ENCODE measurements at regions of chr1 and their contacts with region 1.

Region 1: GRCh38 chr1:205284343-205285144 is 37.0 kb downstream of the NUAK2 start:
- DNase-seq: peak; percentile 93
- H3K4me3 Mint-ChIP-seq: peak overlapping the region; percentile 77
- H3K27ac Mint-ChIP-seq: peak overlapping the region; percentile 91
- H3K4me1 Mint-ChIP-seq: peaks cover 83% of the 10 kb centered on the region
- H3K27me3 Mint-ChIP-seq: peaks cover 17% of the 10 kb centered on the region

Region 2: GRCh38 chr1:205150651-205151428 is 133.7 kb before region 1 on chr1:
- CTCF ChIA-PET with region 1: no interaction called
- POLR2A ChIA-PET with region 1: no interaction called
- DNase-seq: no peak
- H3K4me3 Mint-ChIP-seq: no peak overlapping the region
- H3K27ac Mint-ChIP-seq: no peak overlapping the region
- H3K4me1 Mint-ChIP-seq: no peaks in the 10 kb centered on the region
- H3K27me3 Mint-ChIP-seq: no peaks in the 10 kb centered on the region

Region 3: GRCh38 chr1:205313563-205314308 is 29.2 kb after region 1 on chr1:
- CTCF ChIA-PET with region 1: interaction called, 724 read pairs
- POLR2A ChIA-PET with region 1: interaction called, 234 read pairs
- DNase-seq: peak; percentile 24
- H3K4me3 Mint-ChIP-seq: peak overlapping the region; percentile 56
- H3K27ac Mint-ChIP-seq: peak overlapping the region; percentile 68
- H3K4me1 Mint-ChIP-seq: peaks cover 55% of the 10 kb centered on the region
- H3K27me3 Mint-ChIP-seq: no peaks in the 10 kb centered on the region

Region 4: DNA sequence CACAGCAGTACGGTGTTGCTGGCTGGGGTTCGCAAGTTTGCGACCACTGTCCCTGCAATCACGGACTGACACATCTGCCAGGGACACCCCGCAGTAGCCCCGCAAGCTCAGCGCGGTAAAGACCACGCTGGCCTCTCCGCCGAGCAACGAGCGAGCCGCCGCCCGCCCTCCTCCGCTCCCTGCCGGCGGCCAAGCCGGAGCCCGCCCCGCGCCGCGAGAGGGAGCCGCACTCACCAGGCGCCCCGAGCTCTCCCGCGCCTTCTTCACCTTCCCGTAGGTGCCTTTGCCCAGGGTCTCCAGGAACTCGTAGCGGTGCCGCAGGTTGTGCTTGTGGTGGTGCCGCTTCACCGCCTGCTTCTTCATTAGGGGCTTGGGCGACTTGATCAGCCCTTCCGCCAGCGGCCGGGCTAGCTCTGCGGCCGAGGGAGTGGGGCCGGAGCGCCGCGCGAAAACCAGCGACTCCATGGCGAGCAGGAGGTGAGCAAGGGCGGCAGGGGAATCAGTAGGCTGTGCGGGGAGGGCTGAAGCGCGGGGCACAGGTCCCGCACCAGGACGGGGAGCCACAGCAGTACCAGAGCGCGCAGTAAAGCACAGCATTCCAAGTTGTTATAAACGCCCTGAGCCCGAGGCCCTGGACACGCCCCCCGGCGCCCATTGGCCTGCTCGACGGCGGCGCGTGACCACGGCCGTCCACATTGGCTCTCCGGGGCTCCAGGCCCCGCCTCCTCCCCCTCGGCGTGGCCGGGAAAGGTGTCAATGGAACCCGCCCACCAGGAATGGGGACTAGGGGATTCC is 36.8 kb after region 1 on chr1 and contains the start of gene NUAK2:
- CTCF ChIA-PET with region 1: interaction called, 724 read pairs
- POLR2A ChIA-PET with region 1: interaction called, 234 read pairs
- DNase-seq: peak; percentile 80
- H3K4me3 Mint-ChIP-seq: peak within 1 kb of the TSS; percentile 86
- H3K27ac Mint-ChIP-seq: peak within 1 kb of the TSS; percentile 71
- H3K4me1 Mint-ChIP-seq: peaks cover 54% of the 10 kb centered on the region
- H3K27me3 Mint-ChIP-seq: peaks cover 22% of the 10 kb centered on the region
- total RNA-seq, gene NUAK2: 12.4 to 13.0 TPM

Region 5: GRCh38 chr1:205375835-205376545 is 91.4 kb after region 1 on chr1:
- CTCF ChIA-PET with region 1: no interaction called
- POLR2A ChIA-PET with region 1: no interaction called
- DNase-seq: no peak
- H3K4me3 Mint-ChIP-seq: no peak overlapping the region
- H3K27ac Mint-ChIP-seq: no peak overlapping the region
- H3K4me1 Mint-ChIP-seq: peaks cover 10% of the 10 kb centered on the region
- H3K27me3 Mint-ChIP-seq: peaks cover 40% of the 10 kb centered on the region

Region 6: DNA sequence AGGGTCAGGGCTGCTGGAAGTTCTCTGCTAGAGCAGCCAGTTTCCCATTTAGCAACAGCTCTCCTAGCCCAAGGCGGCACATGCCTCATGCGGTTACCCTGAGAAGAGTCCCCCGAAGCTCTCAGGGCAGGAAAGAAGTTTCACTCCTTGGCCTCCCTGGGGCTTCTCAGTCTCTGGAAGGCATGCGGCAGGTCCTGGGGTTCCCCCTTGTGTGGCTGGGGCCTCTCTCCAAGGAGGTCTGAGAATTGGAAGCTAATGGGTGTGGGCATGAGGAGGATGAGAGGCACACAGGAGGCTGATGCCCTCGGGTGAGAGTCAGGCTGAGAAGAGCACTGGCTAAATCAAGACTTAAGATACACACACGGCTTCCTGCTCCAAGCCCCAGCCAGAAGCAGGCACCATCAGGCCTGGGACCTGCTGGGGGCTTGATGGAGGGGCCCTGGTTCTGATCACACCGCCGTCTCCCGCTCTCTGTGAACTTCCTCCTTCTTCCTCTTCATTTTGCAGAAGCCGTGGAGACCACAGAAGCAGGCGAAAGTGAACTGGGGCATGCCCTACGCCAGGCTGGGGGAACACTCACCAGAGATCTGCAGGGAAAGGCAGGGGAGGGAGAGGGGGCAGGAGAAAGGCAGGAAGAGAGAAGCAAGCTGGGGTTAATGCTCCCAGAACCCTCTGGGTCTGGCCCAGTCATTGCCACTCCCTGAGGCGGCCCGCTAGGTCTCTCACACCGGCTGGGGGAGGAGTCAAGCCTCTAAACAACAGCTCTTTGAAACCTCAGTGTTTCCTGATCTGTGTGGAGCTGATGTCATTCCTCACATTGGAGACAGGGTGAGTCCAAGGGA is 156.2 kb after region 1 on chr1:
- CTCF ChIA-PET with region 1: no interaction called
- POLR2A ChIA-PET with region 1: interaction called, 12 read pairs
- DNase-seq: peak; percentile 83
- H3K4me3 Mint-ChIP-seq: peak overlapping the region; percentile 72
- H3K27ac Mint-ChIP-seq: peak overlapping the region; percentile 88
- H3K4me1 Mint-ChIP-seq: peaks cover 26% of the 10 kb centered on the region
- H3K27me3 Mint-ChIP-seq: no peaks in the 10 kb centered on the region

Measured in activated CD4-positive, alpha-beta memory T cell treated with anti-CD3 and anti-CD28 coated beads, Interleukin-2, amount 10 ng/mL, durations not matched to agents 7 days and 5 days (primary cell).